ENCODE measurements at regions of chr2 and their contacts with region 1.

Region 1: DNA sequence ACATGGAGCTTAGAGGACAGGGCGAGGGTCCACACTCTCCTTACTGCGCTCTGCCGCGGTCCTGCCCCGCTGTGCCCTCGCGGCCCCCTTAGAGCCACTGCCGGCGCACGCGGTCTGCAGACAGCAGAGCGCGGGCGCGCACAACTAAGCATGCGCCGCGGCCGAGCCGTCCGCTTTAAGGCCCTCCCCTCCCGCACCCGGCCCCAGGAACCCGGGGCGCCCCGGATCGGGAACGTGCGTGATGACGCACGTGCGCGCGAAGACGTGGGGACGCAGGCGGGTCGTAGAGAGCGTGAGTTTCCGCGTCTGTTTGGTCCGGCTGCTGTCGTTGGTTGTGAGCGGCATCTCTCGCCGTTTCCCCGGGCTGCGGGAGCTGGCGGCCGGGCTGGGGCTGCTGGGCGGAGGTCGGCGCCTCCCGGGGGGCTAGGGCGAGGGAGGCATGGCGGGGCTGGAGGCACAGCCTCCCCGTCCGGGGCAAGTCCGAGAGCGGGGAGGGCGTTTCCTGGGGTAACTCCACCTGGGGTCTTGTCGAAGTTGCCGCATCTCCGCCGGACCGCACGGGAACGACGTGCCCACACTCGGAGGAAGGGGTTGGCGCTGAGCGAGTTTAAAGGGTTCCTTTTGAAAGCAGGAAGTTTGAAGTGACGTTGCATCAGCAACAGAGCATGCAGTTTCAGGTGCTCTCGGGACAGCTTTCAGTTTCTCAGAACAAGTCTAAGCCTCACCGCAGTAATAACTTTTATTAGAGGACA is at the start of gene RHBDD1:
- DNase-seq: peak; percentile 88 to 98
- ATAC-seq: peak; percentile 96 to 97
- H3K4me3 ChIP-seq: peak within 1 kb of the TSS; percentile 72
- H3K27ac ChIP-seq: peak within 1 kb of the TSS; percentile 97 to 100
- H3K4me1 ChIP-seq: peaks cover 41% of the 10 kb centered on the region
- CTCF ChIP-seq: no peak
- EP300 ChIP-seq: no peak
- POLR2A ChIP-seq: peak; percentile 98
- RAD21 ChIP-seq: 0 out of 5 replicates have a peak, but pooled peaks of 1 of the 2 experiments have one; percentile 11
- polyA plus RNA-seq, gene RHBDD1: 46.9 and 50.6 TPM in 2 replicates

Region 2: GRCh38 chr2:226825056-226825455 is 10.9 kb before region 1 on chr2:
- CTCF ChIA-PET with region 1: no interaction called
- POLR2A ChIA-PET with region 1: interaction called, 11 read pairs
- DNase-seq: no peak
- ATAC-seq: no peak
- H3K4me3 ChIP-seq: no peak overlapping the region
- H3K27ac ChIP-seq: no peak overlapping the region
- H3K4me1 ChIP-seq: no peaks in the 10 kb centered on the region
- CTCF ChIP-seq: no peak
- EP300 ChIP-seq: no peak
- POLR2A ChIP-seq: no peak
- RAD21 ChIP-seq: no peak

Measured in A549 (cell line).